Panc1 (cell line): ENCODE measurements at regions of chr3 and their contacts with region 1.

Region 1: DNA sequence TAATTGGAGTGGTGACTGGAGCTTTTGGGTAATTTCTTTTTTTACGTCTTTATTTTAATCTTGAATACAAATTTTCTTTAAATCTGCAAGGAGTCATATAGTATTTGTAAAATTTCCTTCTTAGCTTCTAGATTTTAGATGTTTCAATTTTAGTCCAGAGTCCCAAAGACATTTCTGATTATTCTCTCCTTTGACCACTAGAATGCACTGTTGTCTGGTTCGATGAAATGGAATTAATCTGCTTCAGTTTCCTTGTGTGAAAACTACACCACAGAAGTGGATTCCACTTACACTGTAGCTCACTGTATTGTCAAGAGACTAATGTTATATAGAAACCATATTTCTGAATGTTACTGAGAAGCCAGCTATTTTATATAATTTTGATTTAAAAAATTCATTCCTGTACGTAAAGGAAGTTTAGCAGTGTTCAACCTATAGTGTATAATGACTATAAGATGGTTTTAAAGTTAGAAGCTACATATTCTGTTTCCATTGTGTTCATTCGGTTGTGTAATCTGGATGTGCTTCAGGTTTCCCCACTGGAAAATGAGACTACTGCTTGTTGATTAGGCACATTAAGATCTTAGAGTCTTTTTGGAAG is 6.1 kb downstream of the GRAMD1C start:
- DNase-seq: no peak
- ATAC-seq: peak; percentile 68; the same call in 1 of the 2 replicates
- H3K4me3 ChIP-seq: no peak overlapping the region
- H3K27ac ChIP-seq: no peak overlapping the region
- H3K4me1 ChIP-seq: no peaks in the 10 kb centered on the region
- H3K27me3 ChIP-seq: no peaks in the 10 kb centered on the region
- CTCF ChIP-seq: peak; percentile 78; the same call in 1 of the 2 replicates

Region 2: DNA sequence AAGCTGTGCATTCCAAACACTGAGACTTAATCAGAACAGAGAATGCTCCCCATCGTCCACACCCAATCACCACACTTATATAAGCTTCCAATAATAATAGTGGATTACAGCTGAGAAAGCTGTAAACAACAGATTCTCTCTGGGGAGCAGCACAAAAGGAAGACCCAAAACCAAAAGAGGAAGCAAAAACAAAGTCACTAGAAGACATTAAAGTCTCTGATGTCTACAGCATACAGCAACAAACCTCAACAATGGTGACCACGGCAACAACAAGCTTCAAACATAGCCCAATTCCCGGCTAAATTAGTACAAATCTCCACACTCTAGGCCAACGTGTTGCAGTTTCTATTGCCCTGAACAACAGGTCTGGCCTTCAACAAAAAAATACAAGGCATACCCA is 140.8 kb after region 1 on chr3:
- CTCF ChIA-PET with region 1: no interaction called
- POLR2A ChIA-PET with region 1: no interaction called
- in situ Hi-C with region 1: no loop called
- intact Hi-C with region 1: no loop called
- DNase-seq: no peak
- ATAC-seq: no peak
- H3K4me3 ChIP-seq: no peak overlapping the region
- H3K27ac ChIP-seq: no peak overlapping the region
- H3K4me1 ChIP-seq: no peaks in the 10 kb centered on the region
- H3K27me3 ChIP-seq: no peaks in the 10 kb centered on the region
- CTCF ChIP-seq: no peak

Region 3: DNA sequence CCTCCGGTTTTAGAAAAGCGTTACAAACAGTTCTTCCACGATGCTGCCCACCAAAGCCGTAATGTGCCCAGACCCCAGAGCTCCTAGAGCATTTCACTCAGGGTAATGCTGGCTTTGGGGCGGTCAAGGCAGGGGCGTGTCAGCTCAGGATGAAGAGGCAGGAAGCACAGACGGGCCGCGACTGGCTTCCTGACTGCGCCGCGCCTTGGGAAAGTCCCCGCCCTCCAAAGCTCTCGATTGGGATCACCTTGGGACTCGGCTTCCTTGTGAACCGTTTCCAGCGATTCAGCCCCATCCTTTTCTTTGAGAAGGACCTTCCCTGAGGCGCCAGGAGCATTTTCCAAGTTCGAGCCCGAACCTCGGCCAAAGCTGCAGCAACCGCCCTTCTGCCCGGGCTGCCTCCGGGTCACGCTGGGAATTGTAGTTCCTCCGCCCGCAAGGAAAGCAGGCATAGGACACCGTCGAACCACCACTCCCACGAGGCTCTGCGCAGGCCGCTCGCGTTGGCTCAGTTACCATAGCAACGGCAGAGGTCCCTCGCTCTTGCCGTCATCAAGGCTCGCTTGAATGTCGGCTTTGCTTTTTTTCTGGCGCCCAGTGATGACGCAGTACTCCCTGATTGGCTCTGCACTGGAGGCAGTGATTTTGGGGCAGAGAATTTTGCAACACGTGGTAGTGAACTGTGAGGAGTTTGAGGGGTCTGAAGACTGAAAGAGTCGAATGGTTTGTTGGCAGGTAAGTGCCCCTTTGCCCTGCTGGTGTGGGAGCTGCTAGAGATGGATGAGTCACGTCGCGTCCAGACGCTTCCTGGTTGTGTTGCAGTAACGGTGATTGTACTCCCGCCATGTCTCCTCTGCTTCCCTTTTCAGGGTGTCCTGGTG is 211.6 kb after region 1 on chr3 and contains the starts of genes CCDC191 and QTRT2:
- CTCF ChIA-PET with region 1: no interaction called
- POLR2A ChIA-PET with region 1: no interaction called
- in situ Hi-C with region 1: no loop called
- intact Hi-C with region 1: loop called (anchors 10 kb)
- DNase-seq: peak; percentile 98
- ATAC-seq: peak; percentile 99
- H3K4me3 ChIP-seq: peak within 1 kb of the TSS; percentile 87 to 97
- H3K27ac ChIP-seq: peak within 1 kb of the TSS; percentile 86
- H3K4me1 ChIP-seq: peaks cover 16% of the 10 kb centered on the region
- H3K27me3 ChIP-seq: no peaks in the 10 kb centered on the region
- CTCF ChIP-seq: no peak
- total RNA-seq, gene CCDC191: 5.6 TPM
- total RNA-seq, gene QTRT2: 51.6 TPM